HEK293 (cell line): ENCODE measurements at regions of chr12 and their contacts with region 1.

Region 1: GRCh38 chr12:124917135-124917840 is 2.8 kb upstream of the UBC start:
- H3K4me3 ChIP-seq: peak overlapping the region; percentile 38
- H3K27ac ChIP-seq: peak overlapping the region; percentile 77
- H3K4me1 ChIP-seq: peaks cover 24% of the 10 kb centered on the region
- CTCF ChIP-seq: no peak

Region 2: DNA sequence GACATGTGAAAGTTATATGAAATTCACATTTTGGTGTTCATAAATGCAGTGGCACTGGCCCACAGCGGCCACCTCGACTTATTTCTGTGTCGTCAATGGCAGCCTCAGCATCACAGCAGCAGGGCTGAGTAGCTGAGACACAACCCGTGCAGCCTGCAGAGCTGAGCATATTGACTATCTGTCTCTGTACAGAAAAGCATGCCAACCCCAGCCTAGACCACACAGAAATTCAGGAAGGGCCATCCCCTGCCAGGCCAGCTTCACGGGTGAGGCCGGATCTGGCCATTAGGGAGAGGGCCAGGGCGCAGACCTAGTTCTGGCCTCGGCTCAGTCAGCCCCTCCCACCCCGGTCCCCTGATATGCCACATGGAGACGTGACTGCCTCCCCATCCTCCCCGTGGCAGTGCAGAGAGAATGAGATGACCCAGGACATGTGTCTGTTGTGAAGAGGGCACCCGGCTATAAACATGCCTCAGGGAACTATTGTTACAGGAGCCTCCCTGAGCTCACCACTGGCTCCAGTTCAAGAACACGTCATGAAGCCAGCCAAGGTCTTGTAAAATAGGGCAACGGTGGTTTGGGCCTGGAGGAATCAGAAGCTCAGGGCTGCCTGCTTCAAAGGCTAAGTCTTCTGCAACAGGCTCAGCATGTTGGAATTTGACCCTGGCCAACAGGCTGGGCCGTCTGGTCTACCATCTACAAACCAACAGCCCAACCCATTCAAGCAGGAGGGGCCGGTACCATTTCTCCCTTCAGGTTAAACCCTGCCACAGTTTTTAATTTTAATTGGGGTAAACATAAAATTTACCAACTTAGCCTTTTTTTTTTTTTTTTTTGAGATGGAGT is 79.1 kb before region 1 on chr12:
- CTCF ChIA-PET with region 1: no interaction called
- POLR2A ChIA-PET with region 1: interaction called, 17 read pairs
- H3K4me3 ChIP-seq: no peak overlapping the region
- H3K27ac ChIP-seq: peak overlapping the region; percentile 69
- H3K4me1 ChIP-seq: peaks cover 10% of the 10 kb centered on the region
- CTCF ChIP-seq: no peak

Region 3: DNA sequence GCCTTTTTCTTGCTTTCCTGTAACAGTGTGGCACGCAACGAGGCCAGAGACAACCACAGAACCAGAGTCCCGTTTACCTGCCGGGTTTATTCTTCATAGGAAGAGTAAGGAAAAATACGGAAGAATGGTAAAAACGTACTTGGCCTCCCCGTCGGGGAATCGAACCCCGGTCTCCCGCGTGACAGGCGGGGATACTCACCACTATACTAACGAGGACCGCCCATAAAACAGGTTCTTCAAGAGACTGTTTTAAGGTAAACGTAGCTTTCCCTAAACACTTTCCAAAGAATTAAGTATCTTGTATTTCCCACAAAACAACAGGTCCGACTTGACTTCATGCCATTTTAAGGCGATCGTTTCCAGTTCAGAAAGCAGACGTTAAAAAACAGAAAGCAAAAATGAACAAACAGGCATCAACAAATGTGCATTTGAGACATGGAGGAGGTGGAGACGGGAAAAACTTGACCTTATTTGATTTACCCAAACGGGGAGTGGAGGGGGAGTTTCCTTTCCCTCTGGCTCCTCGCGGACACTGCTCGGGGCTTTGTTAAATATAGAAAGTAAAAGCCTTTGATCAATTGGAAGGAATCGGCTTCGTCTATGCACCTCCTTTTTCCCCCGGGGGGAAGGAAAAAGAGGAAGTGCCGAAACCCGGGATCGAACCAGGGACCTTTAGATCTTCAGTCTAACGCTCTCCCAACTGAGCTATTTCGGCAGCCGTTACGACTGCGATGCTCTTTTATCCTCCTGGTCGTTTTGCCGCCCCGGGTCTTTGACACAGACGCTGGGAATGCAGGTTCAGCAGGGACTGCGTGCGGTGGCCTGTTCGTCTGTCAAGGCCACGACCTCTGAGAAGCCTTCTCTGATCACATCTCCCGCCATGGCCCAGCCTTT is 10.2 kb after region 1 on chr12:
- CTCF ChIA-PET with region 1: interaction called, 5 read pairs
- POLR2A ChIA-PET with region 1: interaction called, 48 read pairs
- H3K4me3 ChIP-seq: peak overlapping the region; percentile 71
- H3K27ac ChIP-seq: peak overlapping the region; percentile 72
- H3K4me1 ChIP-seq: no peaks in the 10 kb centered on the region
- CTCF ChIP-seq: no peak

Region 4: GRCh38 chr12:124940549-124941527 is 23.6 kb after region 1 on chr12:
- CTCF ChIA-PET with region 1: interaction called, 19 read pairs
- POLR2A ChIA-PET with region 1: interaction called, 109 read pairs
- H3K4me3 ChIP-seq: peak overlapping the region; percentile 34
- H3K27ac ChIP-seq: peak overlapping the region; percentile 72
- H3K4me1 ChIP-seq: peaks cover 4% of the 10 kb centered on the region
- CTCF ChIP-seq: peak; percentile 99

Region 5: DNA sequence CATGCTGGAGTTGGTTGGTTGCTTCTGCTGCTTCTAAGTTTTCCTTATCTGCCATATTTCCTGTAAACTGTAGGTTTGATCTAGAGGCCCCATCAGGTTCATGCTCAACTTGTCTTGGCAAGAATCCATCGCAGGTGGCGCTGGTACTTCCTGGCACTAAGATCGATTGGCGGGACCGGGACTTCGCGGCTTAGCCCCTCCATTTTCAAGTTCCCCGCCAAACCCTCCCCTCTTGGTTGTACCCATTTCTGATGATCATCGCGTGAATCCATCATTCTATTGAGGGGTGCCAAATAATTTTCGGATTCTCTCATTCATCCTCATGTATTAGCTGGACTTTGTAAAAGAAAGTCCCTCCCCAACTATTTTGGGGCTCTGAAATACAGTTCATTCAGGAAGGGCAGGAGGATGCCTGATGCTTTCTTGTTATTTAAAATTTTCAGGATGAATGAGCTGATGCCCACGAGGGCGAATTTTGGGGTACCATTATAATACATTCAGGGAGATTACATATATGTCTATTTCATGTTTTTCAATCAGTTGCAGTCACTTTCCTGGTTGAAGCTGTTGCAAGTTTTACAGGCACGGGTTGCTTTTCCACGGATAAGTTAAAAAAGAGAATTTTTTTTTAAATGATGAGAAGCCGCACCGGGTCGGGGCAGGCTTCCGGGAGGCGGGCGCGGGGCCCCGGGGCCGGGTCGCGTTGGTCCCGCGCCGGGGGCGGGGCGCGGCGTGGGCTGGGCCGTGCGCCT is 75.8 kb after region 1 on chr12:
- CTCF ChIA-PET with region 1: no interaction called
- POLR2A ChIA-PET with region 1: interaction called, 10 read pairs
- H3K4me3 ChIP-seq: peak overlapping the region; percentile 67
- H3K27ac ChIP-seq: peak overlapping the region; percentile 80; the same call in 1 of the 2 replicates
- H3K4me1 ChIP-seq: no peaks in the 10 kb centered on the region
- CTCF ChIP-seq: peak; percentile 64